Activated T-helper 1 cell treated with anti-CD3 and anti-CD28 coated beads, Interleukin-12 subunit alpha, Interleukin-12 subunit beta, Interleukin-2, Interleukin-4 antibody, amounts not matched to agents 30 ng/mL and 10 ng/mL and 1 ng/mL, durations not matched to agents 14 hours and 24 hours and 36 hours (primary cell): ENCODE measurements at regions of chr17 and their contacts with region 1.

Region 1: DNA sequence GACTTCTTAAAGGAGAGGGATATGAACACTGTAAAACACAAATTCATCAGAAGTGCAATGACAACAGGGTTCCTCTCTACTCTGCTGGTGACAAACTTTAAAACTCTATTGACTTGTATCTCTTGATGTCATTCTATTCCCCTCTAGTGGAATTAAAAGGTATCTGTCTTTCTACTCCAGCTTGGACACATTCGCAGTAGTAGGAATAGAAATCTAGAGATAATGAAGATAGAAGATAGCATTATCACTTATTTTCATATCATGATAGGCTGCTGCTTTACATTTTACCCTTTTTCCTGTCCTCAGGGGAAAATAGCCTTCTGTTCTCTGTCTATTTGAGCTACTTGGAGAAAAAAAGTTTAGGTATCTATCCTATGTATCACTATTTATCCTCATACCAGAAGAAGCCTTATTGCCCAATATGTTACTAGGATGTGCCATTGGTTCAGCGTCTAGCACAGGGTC is 209.6 kb upstream of the CACNG5 start:
- DNase-seq: no peak
- H3K4me3 Mint-ChIP-seq: no peak overlapping the region
- H3K27ac Mint-ChIP-seq: no peak overlapping the region
- H3K4me1 Mint-ChIP-seq: peaks cover 42% of the 10 kb centered on the region
- H3K27me3 Mint-ChIP-seq: no peaks in the 10 kb centered on the region

Region 2: DNA sequence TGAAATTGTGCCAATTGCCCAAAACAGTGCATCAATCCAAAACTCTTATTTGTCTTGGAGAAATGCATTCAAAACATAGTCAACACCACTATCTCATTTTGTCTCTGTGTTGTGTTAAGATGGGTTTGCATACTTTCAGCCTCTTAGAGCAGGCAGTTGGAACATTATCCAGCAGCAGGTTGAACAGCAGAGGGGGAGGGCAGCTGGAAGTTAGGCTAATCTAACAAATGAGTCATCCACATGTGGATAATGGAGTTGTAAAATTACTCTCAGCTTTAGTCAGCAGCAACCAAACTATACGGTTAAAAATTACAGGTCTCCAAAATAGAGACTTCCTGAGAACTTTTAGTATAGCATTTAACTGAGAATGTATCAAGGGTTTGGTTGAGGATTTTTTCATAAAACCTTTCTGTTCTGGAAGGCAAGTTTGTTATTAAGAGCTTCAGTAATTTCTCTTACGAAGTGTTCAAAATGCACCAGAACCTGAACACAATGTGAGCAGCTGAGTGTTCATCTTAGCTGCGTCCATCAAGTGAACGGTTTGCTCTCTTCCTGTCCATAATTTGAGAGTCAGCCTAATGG is 276.7 kb before region 1 on chr17:
- intact Hi-C with region 1: no loop called
- DNase-seq: no peak
- H3K4me3 Mint-ChIP-seq: peak overlapping the region; percentile 62
- H3K27ac Mint-ChIP-seq: peak overlapping the region; percentile 45
- H3K4me1 Mint-ChIP-seq: peaks cover 62% of the 10 kb centered on the region
- H3K27me3 Mint-ChIP-seq: no peaks in the 10 kb centered on the region

Region 3: DNA sequence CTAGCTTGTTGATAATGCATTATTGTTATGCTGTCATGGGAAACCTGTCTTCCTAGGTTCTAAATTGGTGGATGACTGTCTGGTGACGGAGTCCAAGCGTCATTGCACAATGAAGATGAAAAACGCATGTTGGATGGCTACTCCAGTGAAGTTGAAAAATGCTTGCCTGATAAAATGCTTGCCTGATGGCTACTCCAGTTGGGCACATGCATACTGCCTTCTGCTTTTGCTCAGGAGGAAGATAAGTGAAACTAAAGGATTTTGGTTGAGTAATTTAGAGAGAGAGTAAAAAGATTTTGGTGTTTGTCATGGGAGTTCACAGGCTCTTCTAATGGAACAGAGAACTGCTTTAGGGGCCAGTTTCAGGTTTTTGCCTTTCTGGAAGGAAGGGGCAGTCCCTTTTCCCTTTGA is 204.4 kb before region 1 on chr17:
- intact Hi-C with region 1: loop called (anchors 1 kb)
- DNase-seq: no peak
- H3K4me3 Mint-ChIP-seq: no peak overlapping the region
- H3K27ac Mint-ChIP-seq: peak overlapping the region; percentile 62
- H3K4me1 Mint-ChIP-seq: peaks cover 62% of the 10 kb centered on the region
- H3K27me3 Mint-ChIP-seq: no peaks in the 10 kb centered on the region